GM10248 (cell line): ENCODE measurements at regions of chr6 and their contacts with region 1.

Region 1: DNA sequence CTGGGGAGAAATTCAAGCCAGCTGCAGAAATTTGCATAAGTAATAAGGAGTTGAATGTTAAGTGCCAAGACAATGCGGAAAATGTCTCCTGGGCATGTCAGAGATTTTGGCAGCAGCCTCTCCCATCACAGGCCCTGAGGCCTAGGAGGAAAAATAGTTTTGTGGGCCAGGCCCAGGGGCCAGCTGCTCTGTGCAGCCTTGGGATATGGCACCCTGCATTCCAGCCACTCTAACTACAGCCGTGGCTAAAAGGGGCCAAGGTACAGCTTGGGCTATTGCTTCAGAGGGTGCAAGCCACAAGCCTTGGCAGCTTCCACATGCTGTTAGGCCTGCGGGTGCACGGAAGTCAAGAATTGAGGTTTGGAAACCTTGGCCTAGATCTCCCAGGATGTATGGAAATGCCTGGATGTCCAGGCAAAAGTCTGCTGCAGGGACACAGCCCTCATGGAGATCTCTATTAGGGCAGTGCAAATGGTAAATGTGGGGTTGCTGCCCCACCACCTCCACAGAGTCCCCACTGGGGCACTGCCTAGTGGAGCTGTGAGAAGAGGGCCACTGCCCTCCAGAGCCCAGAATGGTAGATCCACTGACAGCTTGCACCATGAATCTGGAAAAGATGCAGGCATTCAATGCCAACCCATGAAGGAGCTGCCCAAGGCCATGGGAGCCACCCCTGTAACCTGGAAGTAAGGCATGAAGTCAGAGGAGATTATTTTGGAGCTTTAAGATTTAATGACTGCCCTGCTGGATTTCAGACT is 126.5 kb downstream of the DTNBP1 start:
- DNase-seq: no peak
- CTCF ChIP-seq: no peak

Region 2: GRCh38 chr6:15551798-15552197 is 15.4 kb after region 1 on chr6:
- CTCF ChIA-PET with region 1: interaction called, 18 read pairs
- POLR2A ChIA-PET with region 1: interaction called, 7 read pairs
- DNase-seq: no peak
- CTCF ChIP-seq: no peak